ENCODE measurements at regions of chr15 and their contacts with region 1.

Region 1: DNA sequence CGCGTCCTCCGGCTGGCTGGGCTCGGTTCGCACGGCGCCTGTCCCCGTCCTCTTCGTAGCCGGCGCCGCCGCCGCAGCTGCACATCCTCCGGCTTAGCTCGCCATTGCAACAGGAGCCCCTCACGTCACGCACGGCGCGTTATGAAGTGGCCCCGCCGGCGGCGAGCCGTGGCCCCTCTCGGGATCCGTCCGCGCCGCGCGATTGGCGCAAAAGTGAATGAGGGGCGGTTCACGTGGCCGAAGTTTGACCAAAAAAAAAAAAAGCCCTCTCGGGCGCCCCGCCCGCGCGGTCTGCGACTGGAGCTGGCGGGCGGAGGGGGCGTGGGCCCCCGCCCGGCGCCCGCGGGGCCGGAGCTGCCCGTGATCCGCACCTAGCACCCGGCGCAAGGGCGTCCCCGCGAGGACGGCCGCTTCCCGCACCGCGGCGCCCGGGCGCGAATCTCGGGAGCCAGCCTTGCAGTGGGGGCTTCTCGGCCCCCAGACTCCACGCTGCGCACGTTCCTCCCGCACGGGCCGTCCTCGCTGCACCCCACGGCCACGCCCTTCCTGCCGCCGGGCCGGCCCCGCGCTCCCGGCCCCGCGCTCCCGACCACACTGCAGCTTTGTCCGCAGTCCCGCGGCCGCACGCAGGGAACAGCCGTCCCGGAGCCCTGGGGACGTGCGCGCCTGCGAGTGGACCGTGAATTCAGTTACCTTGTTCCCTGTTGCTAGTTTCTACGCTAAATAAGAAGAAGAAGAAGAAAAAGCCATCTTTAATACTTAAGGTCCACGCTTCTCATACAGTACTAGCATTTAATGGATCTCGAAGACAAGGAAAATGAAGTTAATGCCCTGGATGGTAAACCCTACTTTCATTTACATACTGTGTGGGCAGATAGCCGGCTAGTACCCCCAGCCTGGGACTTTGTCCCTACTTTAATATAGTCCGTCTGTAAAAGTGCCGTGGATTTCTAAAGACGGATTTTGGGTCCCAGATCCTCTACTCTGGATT is at the start of gene CHSY1:
- DNase-seq: peak; percentile 83 to 88
- H3K4me3 ChIP-seq: peak within 1 kb of the TSS; percentile 79 to 94 (median 91)
- H3K27ac ChIP-seq: peak within 1 kb of the TSS; percentile 85 to 97
- H3K4me1 ChIP-seq: peaks cover 5 to 27% of the 10 kb centered on the region in 2 donors
- H3K27me3 ChIP-seq: no peaks in the 10 kb centered on the region
- CTCF ChIP-seq: no peak
- POLR2A ChIP-seq: peak; percentile 53
- total RNA-seq, gene CHSY1: 22.6 to 36.7 (median 33.4) TPM

Region 2: GRCh38 chr15:101014921-101015841 is 236.9 kb before region 1 on chr15:
- intact Hi-C with region 1: loop called (anchors 10 kb)
- DNase-seq: peak; percentile 40 to 77
- H3K4me3 ChIP-seq: no peak overlapping the region
- H3K27ac ChIP-seq: no peak overlapping the region
- H3K4me1 ChIP-seq: no peaks in the 10 kb centered on the region
- H3K27me3 ChIP-seq: no peaks in the 10 kb centered on the region
- CTCF ChIP-seq: peak in 2 of 3 donors; percentile 80 to 83
- POLR2A ChIP-seq: no peak

Region 3: GRCh38 chr15:101127506-101128076 is 124.5 kb before region 1 on chr15:
- intact Hi-C with region 1: loop called (anchors 10 kb)
- DNase-seq: peak; percentile 60 to 72
- H3K4me3 ChIP-seq: peak overlapping the region in 1 of 3 donors; percentile 8
- H3K27ac ChIP-seq: peak overlapping the region; percentile 72 to 94
- H3K4me1 ChIP-seq: peaks cover 0 to 13% of the 10 kb centered on the region in 2 donors
- H3K27me3 ChIP-seq: no peaks in the 10 kb centered on the region
- CTCF ChIP-seq: no peak
- POLR2A ChIP-seq: no peak

Region 4: GRCh38 chr15:101221902-101222301 is 30.2 kb before region 1 on chr15:
- intact Hi-C with region 1: no loop called
- DNase-seq: no peak
- H3K4me3 ChIP-seq: peak overlapping the region in 1 of 3 donors; percentile 12
- H3K27ac ChIP-seq: no peak overlapping the region
- H3K4me1 ChIP-seq: peaks cover 0 to 7% of the 10 kb centered on the region in 2 donors
- H3K27me3 ChIP-seq: no peaks in the 10 kb centered on the region
- CTCF ChIP-seq: no peak
- POLR2A ChIP-seq: no peak

Measured in breast epithelium (tissue), 4 donors.